GM10248 (cell line): ENCODE measurements at regions of chr7 and their contacts with region 1.

Region 1: GRCh38 chr7:106273009-106273668 is 11.6 kb downstream of the NAMPT start:
- DNase-seq: peak; percentile 25
- CTCF ChIP-seq: no peak

Region 2: GRCh38 chr7:105429746-105430612 is 843.2 kb before region 1 on chr7:
- CTCF ChIA-PET with region 1: no interaction called
- POLR2A ChIA-PET with region 1: no interaction called
- DNase-seq: peak; percentile 52
- CTCF ChIP-seq: peak; percentile 68

Region 3: DNA sequence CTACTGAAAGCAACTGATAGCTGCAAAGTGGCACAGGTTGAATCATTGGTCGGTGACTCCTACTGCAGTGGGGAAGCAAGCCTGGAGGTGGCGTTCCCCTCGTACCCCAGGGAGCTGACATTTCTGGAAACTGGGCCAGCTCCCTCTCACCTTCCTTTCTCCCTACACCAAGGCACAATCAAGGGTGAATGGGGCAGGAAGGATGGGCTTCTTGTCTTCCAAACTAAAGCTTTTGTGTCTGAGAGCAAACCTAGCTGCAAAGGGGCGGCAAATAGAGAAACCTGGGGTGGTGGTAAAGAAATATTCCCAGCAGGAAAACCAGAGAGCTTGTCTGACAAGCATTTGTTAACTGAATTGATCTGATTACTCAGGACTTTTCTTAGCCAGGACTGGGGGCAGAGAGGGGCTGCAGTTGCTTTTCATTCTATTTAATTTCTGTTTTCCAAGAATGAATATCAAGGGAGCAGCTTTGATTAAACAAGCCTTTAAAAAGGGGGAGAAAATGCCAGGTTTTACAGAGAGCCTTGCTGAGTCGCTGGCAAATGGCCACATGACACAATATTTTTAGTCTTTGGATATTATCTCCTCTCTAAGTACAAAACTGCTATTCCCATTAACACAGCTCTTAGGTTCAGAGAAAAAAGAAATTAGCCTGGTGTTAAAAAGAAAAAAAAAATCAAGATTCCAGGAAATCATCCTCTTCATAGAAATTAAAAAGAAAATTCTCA is 282.2 kb before region 1 on chr7:
- CTCF ChIA-PET with region 1: no interaction called
- POLR2A ChIA-PET with region 1: no interaction called
- DNase-seq: no peak
- CTCF ChIP-seq: no peak

Region 4: DNA sequence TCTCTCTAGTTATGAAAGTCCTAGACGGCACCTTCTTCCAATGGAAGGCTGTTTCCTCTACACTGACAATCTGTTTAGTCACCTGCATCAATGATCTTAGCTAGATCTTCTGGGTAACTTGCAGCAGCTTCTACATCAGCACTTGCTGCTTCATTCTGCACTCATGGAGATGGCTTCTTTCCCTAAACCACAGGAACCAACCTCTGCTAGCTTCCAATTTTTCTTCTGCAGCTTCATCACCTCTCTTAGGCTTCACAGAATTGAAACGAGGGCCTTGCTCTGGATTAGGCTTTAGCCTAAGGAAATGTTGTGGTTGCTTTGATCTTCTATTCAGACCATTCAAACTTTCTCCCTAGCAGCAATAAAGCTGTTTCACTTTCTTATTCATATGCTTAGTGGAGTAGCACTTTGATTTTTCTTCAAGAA is 13.0 kb before region 1 on chr7:
- CTCF ChIA-PET with region 1: interaction called, 10 read pairs
- POLR2A ChIA-PET with region 1: no interaction called
- DNase-seq: no peak
- CTCF ChIP-seq: no peak

Region 5: GRCh38 chr7:106285051-106285854 is 12.1 kb after region 1 on chr7:
- CTCF ChIA-PET with region 1: interaction called, 21 read pairs
- POLR2A ChIA-PET with region 1: interaction called, 20 read pairs
- DNase-seq: peak; percentile 94
- CTCF ChIP-seq: no peak